ENCODE measurements at regions of chr14 and their contacts with region 1.

Region 1: GRCh38 chr14:68663385-68664076 is 129.3 kb downstream of the ZFP36L1 start:
- DNase-seq: no peak
- H3K4me3 ChIP-seq: no peak overlapping the region
- H3K27ac ChIP-seq: peak overlapping the region; percentile 59 to 84 (median 75)
- H3K4me1 ChIP-seq: peaks cover 22 to 55% (median 27%) of the 10 kb centered on the region in 4 donors
- H3K27me3 ChIP-seq: no peaks in the 10 kb centered on the region
- CTCF ChIP-seq: no peak
- EP300 ChIP-seq: no peak
- POLR2A ChIP-seq: no peak

Region 2: GRCh38 chr14:68589447-68590220 is 73.9 kb before region 1 on chr14:
- in situ Hi-C with region 1: no loop called
- intact Hi-C with region 1: loop called (anchors 1 kb)
- DNase-seq: peak; percentile 42
- H3K4me3 ChIP-seq: no peak overlapping the region
- H3K27ac ChIP-seq: peak overlapping the region; percentile 75 to 89 (median 82)
- H3K4me1 ChIP-seq: peaks cover 24 to 35% (median 31%) of the 10 kb centered on the region in 4 donors
- H3K27me3 ChIP-seq: no peaks in the 10 kb centered on the region
- CTCF ChIP-seq: no peak
- EP300 ChIP-seq: peak; percentile 81
- POLR2A ChIP-seq: no peak

Region 3: DNA sequence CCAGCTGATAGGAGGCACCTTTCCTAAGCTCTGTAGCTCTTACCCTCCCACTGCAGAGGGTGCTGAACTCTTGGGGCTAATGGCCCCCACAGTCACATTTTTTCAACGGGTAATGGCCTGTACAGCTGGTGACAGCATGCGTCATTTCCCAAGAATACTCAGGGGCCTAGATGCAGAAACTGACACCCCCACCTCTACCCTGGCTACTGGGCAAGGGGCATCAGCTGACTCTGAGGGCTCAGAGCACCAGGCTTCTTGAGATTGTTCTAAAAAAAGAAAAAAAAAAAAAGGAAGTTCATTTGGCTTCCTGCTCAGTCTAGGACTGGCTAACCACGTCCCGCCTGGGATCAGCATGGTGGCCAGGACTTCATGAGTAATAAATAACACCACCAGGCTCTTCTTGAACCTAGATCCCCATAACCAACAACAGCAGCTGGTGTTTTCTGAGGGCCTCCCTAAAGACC is 94.1 kb after region 1 on chr14:
- in situ Hi-C with region 1: no loop called
- intact Hi-C with region 1: no loop called
- DNase-seq: no peak
- H3K4me3 ChIP-seq: no peak overlapping the region
- H3K27ac ChIP-seq: no peak overlapping the region
- H3K4me1 ChIP-seq: peaks cover 0 to 10% (median 0%) of the 10 kb centered on the region in 4 donors
- H3K27me3 ChIP-seq: no peaks in the 10 kb centered on the region
- CTCF ChIP-seq: no peak
- EP300 ChIP-seq: no peak
- POLR2A ChIP-seq: no peak

Region 4: DNA sequence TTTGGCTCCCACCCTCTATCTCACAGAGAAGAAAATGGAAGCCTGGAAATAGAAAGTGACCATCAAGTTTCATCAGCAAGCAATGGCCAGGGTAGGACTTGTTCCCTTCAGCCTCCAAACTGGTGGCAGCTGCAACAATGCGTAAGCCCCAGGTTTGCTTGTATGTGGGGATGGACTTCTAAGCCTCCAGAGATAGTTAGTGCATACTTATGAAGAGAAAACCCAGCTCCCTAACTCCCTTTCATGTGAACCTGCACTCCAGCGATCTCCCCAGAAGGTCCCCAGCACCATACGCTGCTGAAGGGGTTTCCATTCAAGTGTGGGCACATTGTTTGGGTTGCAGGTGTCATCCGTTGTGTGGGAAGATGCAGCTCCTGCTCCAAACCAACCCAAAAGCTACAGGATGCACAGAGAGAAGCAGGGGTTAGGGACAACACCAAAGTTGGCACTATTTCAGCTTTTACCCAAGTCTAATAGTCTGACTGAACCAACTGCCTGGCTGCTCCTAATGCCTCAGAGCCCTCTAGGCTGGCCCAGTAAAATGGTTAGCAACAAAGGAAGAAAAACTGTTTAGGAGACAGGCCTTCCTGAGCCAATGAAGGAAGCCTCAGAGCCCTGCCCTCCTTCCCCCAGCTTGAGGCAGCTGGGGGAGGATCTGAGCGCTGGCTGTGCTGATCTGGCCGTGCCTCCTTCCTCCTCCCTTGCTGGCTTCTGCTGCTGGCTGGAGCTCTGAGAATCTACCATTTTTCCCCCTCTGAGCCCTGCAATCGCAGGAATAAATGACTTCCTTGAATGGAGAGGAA is 117.0 kb after region 1 on chr14:
- in situ Hi-C with region 1: no loop called
- intact Hi-C with region 1: loop called (anchors 5 kb)
- DNase-seq: peak; percentile 68
- H3K4me3 ChIP-seq: no peak overlapping the region
- H3K27ac ChIP-seq: peak overlapping the region; percentile 97 to 100 (median 98)
- H3K4me1 ChIP-seq: peaks cover 32 to 71% (median 53%) of the 10 kb centered on the region in 4 donors
- H3K27me3 ChIP-seq: no peaks in the 10 kb centered on the region
- CTCF ChIP-seq: no peak
- EP300 ChIP-seq: no peak
- POLR2A ChIP-seq: no peak

Measured in transverse colon (tissue), 4 donors.